Activated CD4-positive, alpha-beta T cell treated with anti-CD3 and anti-CD28 coated beads for 36 hours (primary cell): ENCODE measurements at regions of chr17 and their contacts with region 1.

Region 1: DNA sequence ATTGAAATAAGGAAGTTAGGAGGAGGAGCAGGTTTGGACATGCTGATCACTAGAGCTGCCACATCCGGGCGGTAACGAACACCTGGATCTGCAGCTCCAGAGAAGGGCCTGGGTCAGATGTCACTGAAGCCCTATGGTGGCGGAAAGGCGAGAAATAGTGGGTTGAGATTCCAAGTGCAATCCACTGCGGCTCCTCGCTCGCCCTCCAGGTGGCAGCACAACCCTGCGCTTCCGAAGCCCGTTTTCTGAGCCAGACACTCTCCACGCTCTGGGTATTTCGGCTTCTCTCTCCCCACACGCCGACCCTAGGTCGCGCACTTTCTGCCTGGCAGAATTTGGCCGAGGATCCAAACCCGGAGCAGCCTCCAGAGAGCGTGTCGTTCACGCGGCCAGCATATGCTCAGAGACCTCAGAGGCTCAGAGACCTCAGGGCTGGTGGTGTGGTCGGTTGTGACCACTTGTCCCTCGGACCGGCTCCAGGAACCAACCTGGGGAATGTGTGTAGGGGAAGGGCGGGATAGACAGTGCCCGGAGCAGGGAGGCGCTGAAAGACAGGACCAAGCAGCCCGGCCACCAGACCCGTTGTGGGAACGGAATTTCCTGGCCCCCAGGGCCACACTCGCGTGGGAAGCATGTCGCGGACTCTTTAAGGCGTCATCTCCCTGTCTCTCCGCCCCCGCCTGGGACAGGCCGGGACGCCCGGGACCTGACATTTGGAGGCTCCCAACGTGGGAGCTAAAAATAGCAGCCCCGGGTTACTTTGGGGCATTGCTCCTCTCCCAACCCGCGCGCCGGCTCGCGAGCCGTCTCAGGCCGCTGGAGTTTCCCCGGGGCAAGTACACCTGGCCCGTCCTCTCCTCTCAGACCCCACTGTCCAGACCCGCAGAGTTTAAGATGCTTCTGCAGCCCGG is 744 bp upstream of the SLC2A4 start:
- DNase-seq: peak; percentile 92
- ATAC-seq: peak; percentile 84
- H3K4me3 Mint-ChIP-seq: peak overlapping the region; percentile 70
- H3K27ac Mint-ChIP-seq: no peak overlapping the region
- H3K4me1 Mint-ChIP-seq: peaks cover 21% of the 10 kb centered on the region
- H3K27me3 Mint-ChIP-seq: peaks cover 17% of the 10 kb centered on the region

Region 2: GRCh38 chr17:7156342-7156940 is 124.3 kb before region 1 on chr17:
- CTCF ChIA-PET with region 1: no interaction called
- POLR2A ChIA-PET with region 1: no interaction called
- intact Hi-C with region 1: no loop called
- DNase-seq: no peak
- ATAC-seq: no peak
- H3K4me3 Mint-ChIP-seq: no peak overlapping the region
- H3K27ac Mint-ChIP-seq: no peak overlapping the region
- H3K4me1 Mint-ChIP-seq: no peaks in the 10 kb centered on the region
- H3K27me3 Mint-ChIP-seq: peaks cover 8% of the 10 kb centered on the region

Region 3: GRCh38 chr17:7234083-7234951 is 46.5 kb before region 1 on chr17 and contains the start of gene DVL2:
- CTCF ChIA-PET with region 1: interaction called, 3 read pairs
- POLR2A ChIA-PET with region 1: no interaction called
- intact Hi-C with region 1: loop called in 1 of 2 experiments (anchors 1 kb)
- DNase-seq: peak; percentile 97
- ATAC-seq: peak; percentile 40
- H3K4me3 Mint-ChIP-seq: peak within 1 kb of the TSS; percentile 97
- H3K27ac Mint-ChIP-seq: peak within 1 kb of the TSS; percentile 91
- H3K4me1 Mint-ChIP-seq: peaks cover 49% of the 10 kb centered on the region
- H3K27me3 Mint-ChIP-seq: no peaks in the 10 kb centered on the region
- total RNA-seq, gene DVL2: 49.1 to 53.3 TPM

Region 4: DNA sequence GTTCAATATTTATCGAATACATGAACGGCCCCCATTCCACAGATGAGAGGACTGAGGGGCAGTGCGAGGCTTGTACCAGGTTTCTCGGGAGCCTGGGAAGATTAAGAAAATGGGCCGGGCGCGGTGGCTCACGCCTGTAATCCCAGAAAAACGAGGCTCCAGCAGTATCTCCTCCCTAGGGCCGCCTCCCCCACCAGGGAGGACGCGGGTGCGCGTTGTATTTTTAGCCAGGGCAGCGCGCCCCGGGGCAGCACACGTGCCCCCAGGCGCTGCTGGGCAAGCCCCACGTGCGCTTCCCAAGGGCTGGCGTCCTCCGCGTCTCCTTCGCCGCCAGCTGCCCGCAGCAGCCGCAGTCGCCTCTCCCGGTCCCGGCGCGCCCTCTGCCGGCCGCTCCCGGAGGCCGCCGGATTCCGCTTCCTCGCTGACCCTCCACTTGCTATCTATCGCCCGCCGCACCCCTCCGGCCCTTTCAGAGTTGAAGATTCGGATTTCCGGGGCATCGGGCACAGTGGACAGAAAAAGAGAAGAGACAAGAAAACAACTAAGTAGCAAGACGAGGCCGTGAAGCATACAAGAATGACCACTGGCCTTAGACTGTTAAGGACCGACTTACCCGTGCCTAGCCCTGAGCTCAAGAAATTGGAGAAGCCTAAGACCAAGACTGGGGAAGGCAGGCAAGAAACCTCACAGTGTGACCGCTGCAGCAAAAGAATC is 15.6 kb after region 1 on chr17:
- CTCF ChIA-PET with region 1: interaction called, 45 read pairs
- POLR2A ChIA-PET with region 1: no interaction called
- intact Hi-C with region 1: loop called (anchors 1 kb)
- DNase-seq: peak; percentile 83
- ATAC-seq: peak; percentile 38
- H3K4me3 Mint-ChIP-seq: peak overlapping the region; percentile 35
- H3K27ac Mint-ChIP-seq: no peak overlapping the region
- H3K4me1 Mint-ChIP-seq: peaks cover 23% of the 10 kb centered on the region
- H3K27me3 Mint-ChIP-seq: peaks cover 19% of the 10 kb centered on the region

Region 5: DNA sequence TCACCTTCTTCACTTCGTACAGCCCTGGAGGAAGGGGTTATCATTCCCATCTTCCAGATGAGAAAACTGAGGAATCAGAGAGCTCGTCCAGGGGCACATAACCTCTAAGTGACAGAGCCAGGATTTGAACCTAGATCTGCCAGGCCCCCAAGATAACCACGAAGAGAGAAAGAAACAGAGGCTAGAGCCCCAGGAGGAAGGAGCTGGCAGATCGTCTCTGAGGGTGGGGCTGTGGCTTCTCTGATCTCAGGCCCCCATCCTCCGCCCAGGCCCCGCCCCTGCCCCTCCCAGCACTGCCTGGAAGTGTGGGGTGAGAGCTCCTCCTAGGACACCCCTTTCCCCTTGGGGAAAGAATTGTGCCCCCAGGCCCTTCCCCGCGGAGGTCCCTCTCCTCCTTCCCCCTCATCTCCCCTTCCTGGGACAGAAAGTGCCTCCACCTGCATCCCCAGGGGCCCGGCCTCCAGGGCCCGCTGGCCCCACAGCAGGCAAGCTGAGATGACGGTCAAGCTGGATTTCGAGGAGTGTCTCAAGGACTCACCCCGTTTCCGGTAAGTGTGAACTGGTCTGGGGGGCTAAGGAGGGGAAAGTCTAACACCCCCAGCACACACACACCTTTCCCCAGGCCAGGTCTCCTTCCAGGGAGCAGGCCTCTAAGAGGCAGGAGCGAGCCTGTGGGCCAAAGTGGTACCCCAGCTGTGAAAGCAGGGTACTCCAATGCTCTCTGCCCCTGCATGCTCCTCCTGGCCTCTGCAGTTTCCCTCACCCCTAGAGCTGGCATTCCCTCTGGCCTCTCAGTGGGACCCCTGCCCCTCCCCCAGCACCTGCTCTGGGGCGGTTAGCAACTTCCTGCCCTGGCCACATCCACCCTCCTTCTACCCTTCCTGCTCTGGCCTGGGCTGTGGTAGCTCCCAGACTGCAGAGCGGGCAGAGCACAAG is 55.7 kb after region 1 on chr17 and contains the start of gene ACAP1:
- CTCF ChIA-PET with region 1: interaction called, 4 read pairs
- POLR2A ChIA-PET with region 1: no interaction called
- intact Hi-C with region 1: loop called in 1 of 2 experiments (anchors 2 kb)
- DNase-seq: peak; percentile 93
- ATAC-seq: peak; percentile 95
- H3K4me3 Mint-ChIP-seq: peak within 1 kb of the TSS; percentile 98
- H3K27ac Mint-ChIP-seq: peak within 1 kb of the TSS; percentile 99
- H3K4me1 Mint-ChIP-seq: peaks cover 58% of the 10 kb centered on the region
- H3K27me3 Mint-ChIP-seq: no peaks in the 10 kb centered on the region
- total RNA-seq, gene ACAP1: 343 to 375 TPM

Region 6: GRCh38 chr17:7403977-7404736 is 123.4 kb after region 1 on chr17 and contains the start of gene TMEM256:
- CTCF ChIA-PET with region 1: interaction called, 3 read pairs
- POLR2A ChIA-PET with region 1: no interaction called
- intact Hi-C with region 1: loop called in 1 of 2 experiments (anchors 1 kb)
- DNase-seq: peak; percentile 99
- ATAC-seq: peak; percentile 94
- H3K4me3 Mint-ChIP-seq: peak within 1 kb of the TSS; percentile 89
- H3K27ac Mint-ChIP-seq: peak within 1 kb of the TSS; percentile 92
- H3K4me1 Mint-ChIP-seq: peaks cover 16% of the 10 kb centered on the region
- H3K27me3 Mint-ChIP-seq: peaks cover 2% of the 10 kb centered on the region
- total RNA-seq, gene TMEM256: 55.8 to 58.1 TPM

Region 7: GRCh38 chr17:7589204-7589868 is 308.6 kb after region 1 on chr17:
- CTCF ChIA-PET with region 1: no interaction called
- POLR2A ChIA-PET with region 1: no interaction called
- intact Hi-C with region 1: loop called in 1 of 2 experiments (anchors 1 kb)
- DNase-seq: peak; percentile 85
- ATAC-seq: peak; percentile 86
- H3K4me3 Mint-ChIP-seq: no peak overlapping the region
- H3K27ac Mint-ChIP-seq: no peak overlapping the region
- H3K4me1 Mint-ChIP-seq: peaks cover 16% of the 10 kb centered on the region
- H3K27me3 Mint-ChIP-seq: no peaks in the 10 kb centered on the region